ENCODE measurements at regions of chrX and their contacts with region 1.

Region 1: GRCh38 chrX:47413179-47413594 is 42.8 kb downstream of the ZNF157 start:
- DNase-seq: no peak

Region 2: DNA sequence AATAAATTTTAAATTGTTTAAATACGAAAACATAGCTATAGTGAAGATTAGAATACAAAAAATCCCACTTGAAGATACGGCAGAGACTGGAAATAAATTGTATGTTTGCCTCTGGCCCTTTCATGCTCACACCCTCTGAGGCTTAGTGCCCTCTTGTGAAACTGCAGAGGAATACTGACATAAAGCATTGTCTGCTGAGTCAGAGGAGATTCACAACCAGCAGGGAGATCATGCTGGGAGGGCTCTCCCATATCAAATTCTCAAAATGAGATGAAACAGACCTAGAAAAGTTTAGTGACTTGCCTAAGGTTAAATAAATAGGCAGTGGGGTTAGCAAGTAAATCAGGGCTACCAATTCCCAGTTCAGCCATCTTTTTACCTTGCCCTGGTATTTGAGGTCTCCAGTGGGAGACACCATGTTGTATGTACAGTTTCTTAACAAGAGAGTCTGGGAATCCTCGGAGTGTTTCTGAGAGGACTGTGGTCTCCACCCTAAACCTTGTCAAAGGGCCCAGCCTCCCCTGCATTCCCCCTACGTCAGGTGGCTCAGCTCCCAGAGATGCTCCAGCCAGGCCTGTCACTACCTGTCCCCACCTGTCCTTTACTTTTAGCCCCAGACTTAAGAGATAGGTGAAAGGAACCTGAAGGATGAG is 1631.2 kb before region 1 on chrX:
- intact Hi-C with region 1: loop called in 1 of 2 experiments (anchors 5 kb)
- DNase-seq: no peak

Region 3: DNA sequence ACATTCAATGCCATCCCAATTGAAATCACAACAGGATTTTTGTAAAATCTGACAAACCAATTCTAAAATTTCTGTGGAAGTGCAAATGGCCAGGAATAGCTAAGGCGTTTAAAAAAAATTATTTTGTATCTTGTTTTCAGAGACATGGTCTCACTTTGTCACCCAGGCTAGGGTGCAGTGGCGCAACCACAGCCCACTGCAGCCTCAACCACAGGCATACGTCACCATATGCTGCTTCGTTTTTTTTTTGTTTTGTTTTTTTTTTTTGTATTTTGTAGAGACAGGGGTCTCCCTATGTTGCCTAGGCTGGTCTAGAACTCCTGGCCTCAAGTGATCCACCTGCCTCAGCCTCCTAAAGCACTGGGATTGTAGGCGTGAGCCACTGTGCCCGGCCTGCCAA is 45.3 kb after region 1 on chrX:
- intact Hi-C with region 1: no loop called
- DNase-seq: no peak

Region 4: DNA sequence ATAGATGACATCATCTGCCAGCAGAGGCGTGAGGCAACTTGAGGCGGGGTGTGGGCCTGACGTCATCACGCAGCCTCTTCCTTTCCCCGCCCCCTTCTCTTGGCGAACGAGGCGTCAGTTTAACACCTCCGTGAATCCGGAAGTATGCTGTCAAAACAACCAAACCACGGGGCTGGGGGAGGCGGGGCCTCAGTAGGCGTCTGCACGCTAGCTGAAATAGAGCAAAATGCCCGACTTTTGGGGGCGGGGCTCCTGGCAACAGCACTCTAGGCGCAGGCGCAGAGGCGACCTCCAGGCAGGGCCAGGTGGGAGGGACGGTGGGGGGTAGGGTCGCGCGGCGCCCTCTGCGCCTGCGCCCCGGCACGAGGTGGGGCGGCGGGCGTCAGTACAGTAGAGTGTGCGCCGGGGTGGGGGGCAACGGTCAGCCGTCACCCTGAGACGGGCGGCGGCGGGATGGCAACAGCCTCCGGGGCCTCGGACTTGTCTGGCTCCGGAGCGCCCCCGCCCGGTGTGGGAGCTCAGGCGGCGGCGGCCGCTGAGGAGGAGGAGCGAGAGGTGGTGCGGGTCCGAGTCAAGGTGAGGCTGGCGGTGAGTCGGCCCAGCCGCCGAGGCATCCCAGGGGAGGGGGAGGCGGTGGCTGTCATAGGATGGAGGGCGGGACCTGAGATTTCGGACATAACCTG is 1126.3 kb after region 1 on chrX and contains the start of gene TBC1D25:
- intact Hi-C with region 1: no loop called
- DNase-seq: peak; percentile 99
- total RNA-seq, gene TBC1D25: 13.0 to 15.0 TPM

Measured in posterior vena cava (tissue), 2 donors.